HCT116 (cell line): ENCODE measurements at regions of chr10 and their contacts with region 1.

Region 1: DNA sequence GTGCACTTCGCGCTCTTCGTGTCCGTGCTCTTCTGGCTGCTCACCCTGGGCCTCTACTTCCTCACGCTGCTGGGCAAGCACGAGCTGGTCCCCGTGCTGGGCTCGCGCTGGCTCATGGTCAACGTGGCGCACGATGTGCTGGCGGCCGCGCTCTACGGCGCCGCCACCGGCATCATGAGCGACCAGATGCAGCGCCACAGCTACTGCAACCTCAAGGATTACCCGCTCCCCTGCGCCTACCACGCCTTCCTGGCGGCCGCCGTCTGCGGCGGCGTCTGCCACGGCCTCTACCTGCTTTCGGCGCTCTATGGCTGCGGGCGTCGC is 480 bp downstream of the MARVELD1 start:
- DNase-seq: no peak
- ATAC-seq: peak; percentile 52
- H3K4me3 ChIP-seq: peak overlapping the region; percentile 72 to 81
- H3K27ac ChIP-seq: peak overlapping the region; percentile 99
- H3K4me1 ChIP-seq: peaks cover 33 to 52% of the 10 kb centered on the region in 2 experiments
- H3K27me3 ChIP-seq: no peaks in the 10 kb centered on the region
- CTCF ChIP-seq: no peak
- POLR2A ChIP-seq: peak; percentile 22
- RAD21 ChIP-seq: no peak

Region 2: DNA sequence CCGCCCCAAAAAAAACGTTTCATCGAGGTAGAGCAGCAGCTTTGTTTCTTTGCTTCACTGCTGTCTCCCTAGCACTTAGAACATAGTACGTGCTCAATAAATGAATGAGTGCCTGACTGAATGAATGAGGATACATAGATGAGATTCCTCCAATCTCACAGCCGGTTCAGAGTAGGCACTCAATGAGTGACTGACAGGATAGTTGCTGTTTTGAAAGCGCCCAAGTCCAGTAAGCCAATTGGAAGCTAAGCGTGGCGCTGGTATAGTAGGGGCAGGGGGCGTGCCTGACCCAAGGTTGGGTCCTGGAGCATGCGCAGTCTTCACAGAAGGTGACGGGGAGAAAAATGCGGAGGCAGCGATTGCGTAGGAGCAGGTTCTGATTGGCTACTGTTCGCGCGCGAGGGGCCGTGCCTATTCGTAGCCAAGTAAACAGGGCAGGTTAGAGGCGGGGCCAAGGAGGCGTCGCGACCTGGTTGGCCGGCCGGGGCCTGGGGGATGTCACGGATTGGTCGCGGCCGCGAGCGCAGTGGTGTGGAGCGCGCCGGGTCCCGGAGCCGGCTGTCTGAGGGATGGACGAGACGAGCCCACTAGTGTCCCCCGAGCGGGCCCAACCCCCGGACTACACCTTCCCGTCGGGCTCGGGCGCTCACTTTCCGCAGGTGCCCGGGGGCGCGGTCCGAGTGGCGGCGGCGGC is 73.7 kb before region 1 on chr10 and contains the start of gene PI4K2A:
- CTCF ChIA-PET with region 1: no interaction called
- POLR2A ChIA-PET with region 1: no interaction called
- RAD21 ChIA-PET with region 1: no interaction called
- intact Hi-C with region 1: no loop called
- DNase-seq: peak; percentile 99
- ATAC-seq: peak; percentile 99
- H3K4me3 ChIP-seq: peak within 1 kb of the TSS; percentile 83 to 86
- H3K27ac ChIP-seq: peak within 1 kb of the TSS; percentile 67
- H3K4me1 ChIP-seq: peaks cover 8 to 18% of the 10 kb centered on the region in 2 experiments; a peak in 3 of 4 replicates
- H3K27me3 ChIP-seq: no peaks in the 10 kb centered on the region
- CTCF ChIP-seq: no peak
- POLR2A ChIP-seq: no peak
- RAD21 ChIP-seq: no peak
- total RNA-seq, gene PI4K2A: 20.0 TPM

Region 3: GRCh38 chr10:97724341-97724941 is 10.4 kb after region 1 on chr10:
- CTCF ChIA-PET with region 1: interaction called, 18 read pairs
- POLR2A ChIA-PET with region 1: interaction called, 12 read pairs
- RAD21 ChIA-PET with region 1: interaction called, 3 to 6 read pairs
- intact Hi-C with region 1: no loop called
- DNase-seq: no peak
- ATAC-seq: 0 out of 2 replicates have a peak, but pooled peaks have one; percentile 17
- H3K4me3 ChIP-seq: no peak overlapping the region
- H3K27ac ChIP-seq: no peak overlapping the region
- H3K4me1 ChIP-seq: peaks cover 7 to 16% of the 10 kb centered on the region in 2 experiments
- H3K27me3 ChIP-seq: no peaks in the 10 kb centered on the region
- CTCF ChIP-seq: no peak
- POLR2A ChIP-seq: no peak
- RAD21 ChIP-seq: no peak

Region 4: GRCh38 chr10:97731346-97732051 is 17.5 kb after region 1 on chr10:
- CTCF ChIA-PET with region 1: interaction called, 44 read pairs
- POLR2A ChIA-PET with region 1: interaction called, 7 read pairs
- RAD21 ChIA-PET with region 1: interaction called in 1 of 2 experiments, 4 read pairs
- intact Hi-C with region 1: loop called (anchors 1 kb)
- DNase-seq: no peak
- ATAC-seq: peak; percentile 87
- H3K4me3 ChIP-seq: no peak overlapping the region
- H3K27ac ChIP-seq: no peak overlapping the region
- H3K4me1 ChIP-seq: peaks cover 0 to 8% of the 10 kb centered on the region in 2 experiments; a peak in 2 of 4 replicates
- H3K27me3 ChIP-seq: no peaks in the 10 kb centered on the region
- CTCF ChIP-seq: peak; percentile 85 to 95 (median 86)
- POLR2A ChIP-seq: no peak
- RAD21 ChIP-seq: peak; percentile 98

Region 5: DNA sequence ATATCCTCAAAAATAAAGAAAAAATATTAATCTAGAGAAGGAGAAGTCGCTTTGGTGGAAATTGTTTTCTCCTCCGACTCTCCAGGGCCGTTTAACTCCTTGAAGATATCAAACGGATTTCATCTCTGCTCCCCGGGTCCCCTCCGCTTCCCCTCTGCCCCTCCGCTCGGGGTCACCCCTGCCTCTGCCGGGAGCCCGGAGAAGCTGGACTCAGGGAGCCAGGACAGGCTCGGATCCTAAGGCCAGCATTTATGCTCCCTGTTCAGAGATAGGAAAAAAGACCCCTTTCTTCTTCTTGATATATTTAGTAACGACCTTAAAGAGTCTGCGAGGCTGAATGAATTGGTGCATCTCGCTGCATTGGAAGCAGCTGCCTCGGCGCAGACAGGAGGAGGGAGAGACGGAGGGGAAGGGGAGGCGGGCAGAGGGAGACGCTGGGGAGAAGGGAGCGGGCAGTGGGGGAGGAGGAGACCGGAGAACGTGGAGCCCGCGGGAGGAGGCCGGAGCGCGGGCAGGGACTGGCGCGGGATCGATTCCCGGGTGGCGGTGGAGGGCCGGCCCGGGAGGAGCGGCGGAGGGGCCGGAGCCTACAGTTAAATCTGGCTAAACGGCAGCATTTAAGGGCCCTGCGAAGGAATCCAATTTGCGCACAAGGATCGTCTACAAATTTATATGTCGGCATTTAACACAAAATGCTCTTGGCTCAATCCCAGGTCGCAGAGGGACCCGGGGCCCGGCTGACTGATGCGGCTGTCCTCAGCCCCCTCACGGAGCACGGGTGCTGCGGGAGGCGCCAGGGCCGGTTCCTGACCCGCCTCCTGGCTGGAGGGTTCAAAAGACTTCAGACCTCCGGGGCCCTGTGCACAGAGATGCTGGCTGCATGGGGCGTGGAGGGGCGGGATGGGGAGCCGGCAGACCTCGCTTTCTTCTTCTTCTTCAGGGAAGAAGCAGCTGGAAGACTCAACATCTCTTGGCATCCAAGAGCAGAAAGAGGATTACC is 260.8 kb after region 1 on chr10:
- CTCF ChIA-PET with region 1: no interaction called
- POLR2A ChIA-PET with region 1: no interaction called
- RAD21 ChIA-PET with region 1: no interaction called
- intact Hi-C with region 1: no loop called
- DNase-seq: no peak
- ATAC-seq: no peak
- H3K4me3 ChIP-seq: no peak overlapping the region
- H3K27ac ChIP-seq: no peak overlapping the region
- H3K4me1 ChIP-seq: no peaks in the 10 kb centered on the region
- H3K27me3 ChIP-seq: peaks cover 97% of the 10 kb centered on the region
- CTCF ChIP-seq: no peak
- POLR2A ChIP-seq: no peak
- RAD21 ChIP-seq: no peak